Activated T-helper 1 cell treated with anti-CD3 and anti-CD28 coated beads, Interleukin-12 subunit alpha, Interleukin-12 subunit beta, Interleukin-2, Interleukin-4 antibody, amounts not matched to agents 30 ng/mL and 10 ng/mL and 1 ng/mL, durations not matched to agents 14 hours and 24 hours and 36 hours (primary cell): ENCODE measurements at regions of chr14 and their contacts with region 1.

Region 1: DNA sequence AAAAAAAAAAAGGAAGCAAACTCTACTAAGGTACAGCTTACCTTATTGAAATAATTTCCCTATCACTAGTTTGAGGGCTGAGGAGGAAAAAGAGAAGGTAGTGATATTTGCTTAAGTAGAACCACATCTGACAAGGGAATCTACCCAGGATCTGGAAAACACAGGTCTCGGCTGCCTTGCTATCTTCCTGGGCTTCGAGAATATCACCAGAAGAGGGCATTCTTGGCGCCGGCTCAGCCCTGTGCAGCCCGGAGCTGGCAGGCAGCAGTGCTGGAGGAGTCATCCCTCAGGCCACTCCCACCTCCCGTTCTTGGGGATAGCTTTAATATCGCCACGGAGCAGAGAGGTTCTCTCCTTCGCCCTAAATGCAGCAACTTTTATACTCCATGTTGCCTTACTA is 1181.2 kb downstream of the VRK1 start:
- DNase-seq: peak; percentile 70
- H3K4me3 Mint-ChIP-seq: peak overlapping the region; percentile 84
- H3K27ac Mint-ChIP-seq: peak overlapping the region; percentile 87
- H3K4me1 Mint-ChIP-seq: peaks cover 62% of the 10 kb centered on the region
- H3K27me3 Mint-ChIP-seq: no peaks in the 10 kb centered on the region

Region 2: GRCh38 chr14:97380539-97380941 is 597.8 kb before region 1 on chr14:
- intact Hi-C with region 1: loop called (anchors 10 kb)
- DNase-seq: peak; percentile 22
- H3K4me3 Mint-ChIP-seq: peak overlapping the region; percentile 25
- H3K27ac Mint-ChIP-seq: peak overlapping the region; percentile 14
- H3K4me1 Mint-ChIP-seq: peaks cover 52% of the 10 kb centered on the region
- H3K27me3 Mint-ChIP-seq: no peaks in the 10 kb centered on the region

Region 3: GRCh38 chr14:97707603-97708002 is 270.7 kb before region 1 on chr14:
- intact Hi-C with region 1: loop called (anchors 10 kb)
- DNase-seq: no peak
- H3K4me3 Mint-ChIP-seq: peak overlapping the region; percentile 9
- H3K27ac Mint-ChIP-seq: no peak overlapping the region
- H3K4me1 Mint-ChIP-seq: peaks cover 79% of the 10 kb centered on the region
- H3K27me3 Mint-ChIP-seq: no peaks in the 10 kb centered on the region

Region 4: GRCh38 chr14:97994020-97994531 is 15.7 kb after region 1 on chr14:
- intact Hi-C with region 1: loop called (anchors 1 kb)
- DNase-seq: peak; percentile 37
- H3K4me3 Mint-ChIP-seq: peak overlapping the region; percentile 21
- H3K27ac Mint-ChIP-seq: peak overlapping the region; percentile 88
- H3K4me1 Mint-ChIP-seq: peaks cover 47% of the 10 kb centered on the region
- H3K27me3 Mint-ChIP-seq: no peaks in the 10 kb centered on the region

Region 5: GRCh38 chr14:98234208-98234607 is 255.9 kb after region 1 on chr14:
- intact Hi-C with region 1: loop called (anchors 2 kb)
- DNase-seq: no peak
- H3K4me3 Mint-ChIP-seq: no peak overlapping the region
- H3K27ac Mint-ChIP-seq: no peak overlapping the region
- H3K4me1 Mint-ChIP-seq: peaks cover 34% of the 10 kb centered on the region
- H3K27me3 Mint-ChIP-seq: no peaks in the 10 kb centered on the region

Region 6: DNA sequence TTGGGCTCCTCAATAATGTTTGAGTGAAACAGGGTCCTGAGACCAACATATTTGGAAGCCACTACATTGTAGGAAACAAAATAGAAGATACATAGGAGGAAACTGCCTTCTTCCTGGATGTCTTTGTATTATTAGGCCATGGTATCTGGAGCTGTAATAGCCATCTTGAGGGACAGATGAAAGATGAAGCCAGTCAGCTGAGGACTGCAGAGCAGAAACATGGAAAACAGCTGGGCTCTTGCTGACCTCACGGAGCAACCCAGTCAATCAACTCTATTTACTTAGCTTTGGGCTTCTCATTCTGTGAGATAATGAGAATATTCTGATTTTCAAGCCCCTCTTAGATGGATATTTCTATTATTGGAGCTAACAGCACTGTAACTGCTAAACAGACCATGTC is 331.2 kb after region 1 on chr14:
- intact Hi-C with region 1: no loop called
- DNase-seq: no peak
- H3K4me3 Mint-ChIP-seq: no peak overlapping the region
- H3K27ac Mint-ChIP-seq: no peak overlapping the region
- H3K4me1 Mint-ChIP-seq: no peaks in the 10 kb centered on the region
- H3K27me3 Mint-ChIP-seq: no peaks in the 10 kb centered on the region